CD8-positive, alpha-beta T cell (primary cell): ENCODE measurements at regions of chr3 and their contacts with region 1.

Region 1: GRCh38 chr3:196739671-196740480 is at the start of gene PAK2:
- DNase-seq: peak; percentile 78 to 95 (median 90)
- ATAC-seq: peak; percentile 84
- H3K4me3 ChIP-seq: peak within 1 kb of the TSS; percentile 69 to 77
- H3K4me3 Mint-ChIP-seq: peak within 1 kb of the TSS; percentile 99
- H3K27ac ChIP-seq: peak within 1 kb of the TSS; percentile 82 to 88
- H3K27ac Mint-ChIP-seq: peak within 1 kb of the TSS; percentile 98
- H3K4me1 ChIP-seq: peaks cover 27% of the 10 kb centered on the region
- H3K4me1 Mint-ChIP-seq: peaks cover 33% of the 10 kb centered on the region
- H3K27me3 ChIP-seq: no peaks in the 10 kb centered on the region
- H3K27me3 Mint-ChIP-seq: no peaks in the 10 kb centered on the region
- CTCF ChIP-seq: no peak
- total RNA-seq, gene PAK2: 29.9 to 30.4 TPM

Region 2: GRCh38 chr3:196432137-196432879 is 307.6 kb before region 1 on chr3 and contains the start of gene UBXN7:
- CTCF ChIA-PET with region 1: no interaction called
- POLR2A ChIA-PET with region 1: no interaction called
- intact Hi-C with region 1: loop called in 1 of 2 experiments (anchors 5 kb)
- DNase-seq: peak; percentile 94 to 99 (median 97)
- ATAC-seq: peak; percentile 86
- H3K4me3 ChIP-seq: peak within 1 kb of the TSS; percentile 60 to 77
- H3K4me3 Mint-ChIP-seq: peak within 1 kb of the TSS; percentile 76
- H3K27ac ChIP-seq: peak within 1 kb of the TSS; percentile 80 to 85
- H3K27ac Mint-ChIP-seq: peak within 1 kb of the TSS; percentile 97
- H3K4me1 ChIP-seq: peaks cover 13% of the 10 kb centered on the region
- H3K4me1 Mint-ChIP-seq: peaks cover 29% of the 10 kb centered on the region
- H3K27me3 ChIP-seq: no peaks in the 10 kb centered on the region
- H3K27me3 Mint-ChIP-seq: no peaks in the 10 kb centered on the region
- CTCF ChIP-seq: no peak
- total RNA-seq, gene UBXN7: 72.5 to 80.1 TPM

Region 3: GRCh38 chr3:196632046-196632751 is 107.7 kb before region 1 on chr3:
- CTCF ChIA-PET with region 1: no interaction called
- POLR2A ChIA-PET with region 1: no interaction called
- intact Hi-C with region 1: loop called in 1 of 2 experiments (anchors 1 kb)
- DNase-seq: peak; percentile 70 to 96 (median 89)
- ATAC-seq: peak; percentile 79
- H3K4me3 ChIP-seq: peak overlapping the region; percentile 46 to 50
- H3K4me3 Mint-ChIP-seq: peak overlapping the region; percentile 80
- H3K27ac ChIP-seq: peak overlapping the region; percentile 56 to 80
- H3K27ac Mint-ChIP-seq: peak overlapping the region; percentile 93
- H3K4me1 ChIP-seq: peaks cover 36% of the 10 kb centered on the region
- H3K4me1 Mint-ChIP-seq: peaks cover 51% of the 10 kb centered on the region
- H3K27me3 ChIP-seq: no peaks in the 10 kb centered on the region
- H3K27me3 Mint-ChIP-seq: no peaks in the 10 kb centered on the region
- CTCF ChIP-seq: no peak

Region 4: GRCh38 chr3:196711838-196712513 is 27.9 kb before region 1 on chr3 and contains the starts of genes CEP19 and PIGX:
- CTCF ChIA-PET with region 1: interaction called, 6 read pairs
- POLR2A ChIA-PET with region 1: interaction called, 20 read pairs
- intact Hi-C with region 1: loop called (anchors 1 kb)
- DNase-seq: peak; percentile 77 to 99 (median 91)
- ATAC-seq: peak; percentile 83
- H3K4me3 ChIP-seq: peak within 1 kb of the TSS; percentile 72 to 93
- H3K4me3 Mint-ChIP-seq: peak within 1 kb of the TSS; percentile 88
- H3K27ac ChIP-seq: peak within 1 kb of the TSS; percentile 90 to 98
- H3K27ac Mint-ChIP-seq: peak within 1 kb of the TSS; percentile 98
- H3K4me1 ChIP-seq: peaks cover 17% of the 10 kb centered on the region
- H3K4me1 Mint-ChIP-seq: peaks cover 31% of the 10 kb centered on the region
- H3K27me3 ChIP-seq: no peaks in the 10 kb centered on the region
- H3K27me3 Mint-ChIP-seq: no peaks in the 10 kb centered on the region
- CTCF ChIP-seq: no peak
- total RNA-seq, gene CEP19: 0.39 to 0.41 TPM
- total RNA-seq, gene PIGX: 12.0 to 12.2 TPM

Region 5: DNA sequence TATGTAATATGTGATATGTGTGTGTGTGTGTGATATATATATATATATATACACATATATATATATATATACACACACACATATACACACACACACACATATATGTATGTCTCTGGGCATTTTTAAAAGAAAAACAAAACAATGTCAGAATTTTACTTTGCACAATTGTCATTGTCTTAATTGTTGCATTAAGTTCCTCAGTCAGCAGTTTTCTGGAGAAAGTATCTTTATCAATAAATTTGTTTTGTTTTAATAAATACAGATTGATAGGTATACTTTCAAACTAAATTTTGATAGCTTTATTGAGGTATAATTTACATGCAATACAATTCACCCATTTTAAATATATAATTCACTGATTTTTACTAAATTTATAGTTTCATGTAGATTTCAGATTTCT is 64.9 kb after region 1 on chr3:
- CTCF ChIA-PET with region 1: no interaction called
- POLR2A ChIA-PET with region 1: no interaction called
- intact Hi-C with region 1: loop called in 1 of 2 experiments (anchors 5 kb)
- DNase-seq: no peak
- ATAC-seq: no peak
- H3K4me3 ChIP-seq: no peak overlapping the region
- H3K4me3 Mint-ChIP-seq: no peak overlapping the region
- H3K27ac ChIP-seq: no peak overlapping the region
- H3K27ac Mint-ChIP-seq: no peak overlapping the region
- H3K4me1 ChIP-seq: no peaks in the 10 kb centered on the region
- H3K4me1 Mint-ChIP-seq: peaks cover 21% of the 10 kb centered on the region
- H3K27me3 ChIP-seq: no peaks in the 10 kb centered on the region
- H3K27me3 Mint-ChIP-seq: no peaks in the 10 kb centered on the region
- CTCF ChIP-seq: no peak